ENCODE measurements at regions of chr12 and their contacts with region 1.

Region 1: GRCh38 chr12:31651893-31652521 is 7.5 kb upstream of the ETFBKMT start:
- DNase-seq: no peak
- ATAC-seq: no peak
- H3K4me3 Mint-ChIP-seq: no peak overlapping the region
- H3K27ac Mint-ChIP-seq: peak overlapping the region; percentile 47
- H3K4me1 Mint-ChIP-seq: peaks cover 11% of the 10 kb centered on the region
- H3K27me3 Mint-ChIP-seq: no peaks in the 10 kb centered on the region

Region 2: GRCh38 chr12:32264961-32265360 is 613.0 kb after region 1 on chr12:
- CTCF ChIA-PET with region 1: no interaction called
- POLR2A ChIA-PET with region 1: no interaction called
- intact Hi-C with region 1: loop called in 1 of 2 experiments (anchors 2 kb)
- DNase-seq: no peak
- ATAC-seq: no peak
- H3K4me3 Mint-ChIP-seq: no peak overlapping the region
- H3K27ac Mint-ChIP-seq: no peak overlapping the region
- H3K4me1 Mint-ChIP-seq: peaks cover 9% of the 10 kb centered on the region
- H3K27me3 Mint-ChIP-seq: no peaks in the 10 kb centered on the region

Region 3: DNA sequence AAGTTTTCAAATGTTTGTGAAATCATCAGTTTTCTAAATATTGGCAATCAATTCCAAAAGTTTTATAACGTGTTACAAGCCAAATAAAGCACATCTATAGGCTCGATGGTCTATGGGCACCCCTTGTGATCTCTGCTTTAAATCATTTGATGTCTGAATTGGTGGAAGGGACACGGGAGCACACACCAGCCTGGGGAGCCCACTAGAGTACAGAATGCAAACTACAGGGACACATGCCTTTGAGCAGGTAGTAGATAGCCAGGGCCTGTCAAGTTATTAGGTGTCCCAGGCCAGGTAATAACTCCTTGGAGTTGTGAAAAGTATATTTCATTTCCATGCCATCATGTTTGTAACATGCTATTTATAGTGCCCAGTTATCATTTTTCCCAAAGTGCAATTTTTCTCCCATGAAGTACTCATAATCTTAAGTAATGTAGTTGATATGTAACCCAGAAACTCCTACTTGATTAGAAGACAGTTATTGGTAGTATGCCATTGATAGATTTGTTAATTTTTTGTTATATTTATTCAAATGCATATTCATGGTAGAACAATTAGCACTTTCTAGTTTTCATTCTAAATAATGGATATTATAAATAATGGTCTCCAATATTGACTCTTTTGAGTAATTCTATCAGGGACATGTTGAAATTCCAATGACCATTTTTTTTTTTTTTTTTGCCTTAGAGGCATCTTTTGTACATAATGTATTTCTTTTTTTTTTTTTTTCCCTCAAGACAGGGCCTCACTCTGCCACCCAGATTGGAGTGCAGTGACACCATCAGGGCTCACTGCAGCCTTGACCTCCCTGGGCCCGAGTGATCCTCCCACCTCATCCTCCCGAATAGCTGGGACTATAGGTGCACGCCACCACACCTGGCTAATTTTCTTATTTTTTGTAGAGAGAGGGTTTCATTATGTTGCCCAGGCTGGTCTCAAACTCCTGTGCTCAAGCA is 650.5 kb after region 1 on chr12:
- CTCF ChIA-PET with region 1: interaction called, 4 read pairs
- POLR2A ChIA-PET with region 1: no interaction called
- intact Hi-C with region 1: loop called (anchors 2 kb)
- DNase-seq: peak; percentile 37
- ATAC-seq: peak; percentile 66
- H3K4me3 Mint-ChIP-seq: no peak overlapping the region
- H3K27ac Mint-ChIP-seq: no peak overlapping the region
- H3K4me1 Mint-ChIP-seq: no peaks in the 10 kb centered on the region
- H3K27me3 Mint-ChIP-seq: no peaks in the 10 kb centered on the region

Region 4: GRCh38 chr12:32312049-32312670 is 660.2 kb after region 1 on chr12:
- CTCF ChIA-PET with region 1: interaction called, 23 read pairs
- POLR2A ChIA-PET with region 1: no interaction called
- intact Hi-C with region 1: loop called (anchors 1 kb)
- DNase-seq: no peak
- ATAC-seq: no peak
- H3K4me3 Mint-ChIP-seq: no peak overlapping the region
- H3K27ac Mint-ChIP-seq: no peak overlapping the region
- H3K4me1 Mint-ChIP-seq: peaks cover 2% of the 10 kb centered on the region
- H3K27me3 Mint-ChIP-seq: no peaks in the 10 kb centered on the region

Measured in activated CD4-positive, alpha-beta T cell treated with anti-CD3 and anti-CD28 coated beads for 36 hours (primary cell).